ENCODE measurements at regions of chr3 and their contacts with region 1.

Region 1: DNA sequence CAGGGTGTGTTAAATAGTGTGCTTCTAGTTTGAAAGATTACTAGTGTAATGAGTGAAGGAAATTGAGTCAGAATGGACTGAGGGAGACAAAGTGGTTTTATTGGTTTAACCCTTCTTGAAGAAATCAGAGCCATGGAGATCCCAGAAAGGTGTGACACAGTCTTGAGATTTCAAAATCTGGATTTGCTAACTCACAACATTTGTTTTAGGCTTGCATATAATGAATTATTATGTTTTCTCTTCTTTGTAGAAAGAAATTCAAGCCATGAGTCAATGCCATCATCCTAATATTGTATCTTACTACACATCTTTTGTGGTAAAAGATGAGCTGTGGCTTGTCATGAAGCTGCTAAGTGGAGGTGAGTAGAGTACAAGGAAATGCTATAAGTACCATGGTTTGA is 25.1 kb downstream of the OXSR1 start:
- DNase-seq: peak; percentile 89
- H3K4me3 ChIP-seq: no peak overlapping the region
- H3K27ac ChIP-seq: peak overlapping the region; percentile 11
- H3K4me1 ChIP-seq: peaks cover 28% of the 10 kb centered on the region
- H3K27me3 ChIP-seq: no peaks in the 10 kb centered on the region
- CTCF ChIP-seq: no peak

Region 2: GRCh38 chr3:38164966-38165680 is 25.4 kb before region 1 on chr3 and contains the start of gene OXSR1:
- CTCF ChIA-PET with region 1: interaction called, 4 read pairs
- dilution Hi-C with region 1: no loop called
- in situ Hi-C with region 1: no loop called
- intact Hi-C with region 1: loop called (anchors 2 kb)
- DNase-seq: peak; percentile 100
- H3K4me3 ChIP-seq: peak within 1 kb of the TSS; percentile 70 to 96 (median 83)
- H3K27ac ChIP-seq: peak within 1 kb of the TSS; percentile 99
- H3K4me1 ChIP-seq: peaks cover 31% of the 10 kb centered on the region
- H3K27me3 ChIP-seq: no peaks in the 10 kb centered on the region
- CTCF ChIP-seq: no peak
- total RNA-seq, gene OXSR1: 48.3 to 70.6 TPM

Region 3: GRCh38 chr3:38227989-38228388 is 37.5 kb after region 1 on chr3:
- CTCF ChIA-PET with region 1: no interaction called
- dilution Hi-C with region 1: no loop called
- in situ Hi-C with region 1: no loop called
- intact Hi-C with region 1: loop called (anchors 5 kb)
- DNase-seq: peak; percentile 47
- H3K4me3 ChIP-seq: no peak overlapping the region
- H3K27ac ChIP-seq: peak overlapping the region; percentile 40
- H3K4me1 ChIP-seq: peaks cover 24% of the 10 kb centered on the region
- H3K27me3 ChIP-seq: no peaks in the 10 kb centered on the region
- CTCF ChIP-seq: no peak

Region 4: DNA sequence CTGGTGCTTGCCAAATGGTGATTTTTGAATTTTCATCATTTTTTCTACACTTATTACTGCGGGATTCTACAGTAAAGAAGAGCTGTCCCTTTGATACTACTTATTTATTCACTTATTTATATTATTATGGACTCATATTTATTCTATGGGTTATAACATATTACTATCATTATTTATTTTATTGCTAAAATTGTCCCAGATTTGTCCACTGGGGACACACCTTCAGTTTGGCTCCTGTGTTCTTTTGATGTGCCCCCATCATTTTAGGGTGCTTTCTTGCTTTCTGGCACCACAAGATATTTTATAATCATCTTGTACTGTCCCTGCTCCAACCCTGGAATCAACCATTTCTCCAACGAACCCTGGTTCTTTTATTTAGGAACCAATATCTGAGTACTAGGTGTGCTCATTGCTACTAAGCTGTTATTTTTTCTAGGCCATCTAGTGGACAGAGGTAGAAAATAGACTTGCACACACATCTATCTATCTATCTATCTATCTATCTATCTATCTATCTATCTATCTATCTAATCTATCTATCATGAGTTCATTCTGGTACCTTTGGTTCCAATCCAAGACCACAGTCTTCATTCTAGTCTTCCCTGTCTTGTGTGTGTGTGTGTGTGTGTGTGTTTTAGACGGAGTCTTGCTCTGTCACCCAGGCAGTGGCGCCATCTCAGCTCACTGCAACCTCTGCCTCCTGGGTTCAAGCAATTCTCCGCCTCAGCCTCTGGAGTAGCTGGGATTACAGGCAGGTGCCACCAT is 107.6 kb after region 1 on chr3:
- CTCF ChIA-PET with region 1: interaction called, 10 read pairs
- dilution Hi-C with region 1: no loop called
- in situ Hi-C with region 1: no loop called
- intact Hi-C with region 1: no loop called
- DNase-seq: no peak
- H3K4me3 ChIP-seq: no peak overlapping the region
- H3K27ac ChIP-seq: no peak overlapping the region
- H3K4me1 ChIP-seq: no peaks in the 10 kb centered on the region
- H3K27me3 ChIP-seq: no peaks in the 10 kb centered on the region
- CTCF ChIP-seq: peak; percentile 36 to 52

Measured in mammary epithelial cell (primary cell).